CD4-positive, alpha-beta T cell (primary cell): ENCODE measurements at regions of chr9 and their contacts with region 1.

Region 1: GRCh38 chr9:98255578-98256296 is at the start of gene TBC1D2:
- DNase-seq: peak; percentile 95 to 99 (median 98)
- ATAC-seq: peak; percentile 86
- H3K4me3 ChIP-seq: peak within 1 kb of the TSS; percentile 81
- H3K4me3 Mint-ChIP-seq: peak within 1 kb of the TSS; percentile 99
- H3K27ac ChIP-seq: peak within 1 kb of the TSS; percentile 79 to 83
- H3K27ac Mint-ChIP-seq: peak within 1 kb of the TSS; percentile 92
- H3K4me1 ChIP-seq: peaks cover 39% of the 10 kb centered on the region
- H3K4me1 Mint-ChIP-seq: peaks cover 34% of the 10 kb centered on the region
- H3K27me3 ChIP-seq: no peaks in the 10 kb centered on the region
- H3K27me3 Mint-ChIP-seq: no peaks in the 10 kb centered on the region
- CTCF ChIP-seq: peak; percentile 11
- total RNA-seq, gene TBC1D2: 2.9 to 4.0 TPM

Region 2: GRCh38 chr9:97632985-97633858 is 622.5 kb before region 1 on chr9 and contains the starts of genes NCBP1 and TSTD2:
- CTCF ChIA-PET with region 1: no interaction called
- POLR2A ChIA-PET with region 1: interaction called, 39 read pairs
- intact Hi-C with region 1: loop called in 1 of 2 experiments (anchors 5 kb)
- DNase-seq: peak; percentile 92 to 99 (median 94)
- ATAC-seq: peak; percentile 82
- H3K4me3 ChIP-seq: peak within 1 kb of the TSS; percentile 72
- H3K4me3 Mint-ChIP-seq: peak within 1 kb of the TSS; percentile 97
- H3K27ac ChIP-seq: peak within 1 kb of the TSS; percentile 95 to 97
- H3K27ac Mint-ChIP-seq: peak within 1 kb of the TSS; percentile 99
- H3K4me1 ChIP-seq: peaks cover 37% of the 10 kb centered on the region
- H3K4me1 Mint-ChIP-seq: peaks cover 73% of the 10 kb centered on the region
- H3K27me3 ChIP-seq: no peaks in the 10 kb centered on the region
- H3K27me3 Mint-ChIP-seq: no peaks in the 10 kb centered on the region
- CTCF ChIP-seq: no peak
- total RNA-seq, gene NCBP1: 50.7 to 53.5 TPM
- total RNA-seq, gene TSTD2: 23.8 to 26.0 TPM

Region 3: DNA sequence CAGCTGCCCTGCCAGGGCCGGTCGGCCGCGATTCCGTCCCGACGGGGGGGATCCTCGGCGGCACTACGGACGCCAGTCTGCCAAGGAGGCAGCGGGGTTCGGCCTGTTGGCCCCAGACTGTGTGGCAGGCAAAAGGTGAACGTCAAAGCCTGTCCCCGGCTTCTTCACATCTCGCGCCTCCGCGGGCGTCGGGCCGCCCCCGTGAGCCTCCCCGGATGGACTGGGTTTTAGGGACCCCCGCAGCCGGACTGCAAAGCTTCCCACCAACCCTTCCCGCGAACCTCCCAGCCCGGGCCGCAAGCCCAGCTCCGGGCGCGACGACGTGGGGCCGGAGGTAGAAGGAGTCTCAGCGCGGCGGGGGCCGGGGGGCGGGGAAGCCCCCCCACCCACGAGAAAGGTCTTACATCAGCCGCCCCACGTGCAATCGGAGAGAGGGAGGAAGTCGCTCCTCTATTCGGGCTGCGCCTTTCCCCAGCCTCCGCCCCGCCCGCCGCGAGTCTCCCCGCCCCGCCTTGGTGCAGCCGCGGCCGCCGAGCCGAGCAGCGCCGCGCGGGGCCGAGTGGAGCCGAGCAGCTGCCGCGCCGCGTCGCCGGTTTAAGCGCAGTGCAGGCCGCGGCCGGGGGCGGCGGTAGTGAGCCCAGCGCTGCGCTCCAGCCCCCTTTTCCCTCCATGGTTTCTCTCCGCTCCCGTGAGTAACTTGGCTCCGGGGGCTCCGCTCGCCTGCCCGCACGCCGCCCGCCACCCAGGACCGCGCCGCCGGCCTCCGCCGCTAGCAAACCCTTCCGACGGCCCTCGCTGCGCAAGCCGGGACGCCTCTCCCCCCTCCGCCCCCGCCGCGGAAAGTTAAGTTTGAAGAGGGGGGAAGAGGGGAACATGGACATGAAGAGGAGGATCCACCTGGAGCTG is 272.8 kb before region 1 on chr9 and contains the start of gene ANP32B:
- CTCF ChIA-PET with region 1: interaction called, 3 read pairs
- POLR2A ChIA-PET with region 1: interaction called, 38 read pairs
- intact Hi-C with region 1: loop called in 1 of 2 experiments (anchors 5 kb)
- DNase-seq: peak; percentile 87 to 98 (median 94)
- ATAC-seq: peak; percentile 82
- H3K4me3 ChIP-seq: peak within 1 kb of the TSS; percentile 78
- H3K4me3 Mint-ChIP-seq: peak within 1 kb of the TSS; percentile 93
- H3K27ac ChIP-seq: peak within 1 kb of the TSS; percentile 78 to 88
- H3K27ac Mint-ChIP-seq: peak within 1 kb of the TSS; percentile 89
- H3K4me1 ChIP-seq: peaks cover 50% of the 10 kb centered on the region
- H3K4me1 Mint-ChIP-seq: peaks cover 73% of the 10 kb centered on the region
- H3K27me3 ChIP-seq: no peaks in the 10 kb centered on the region
- H3K27me3 Mint-ChIP-seq: no peaks in the 10 kb centered on the region
- CTCF ChIP-seq: peak; percentile 67
- total RNA-seq, gene ANP32B: 178 to 192 TPM

Region 4: DNA sequence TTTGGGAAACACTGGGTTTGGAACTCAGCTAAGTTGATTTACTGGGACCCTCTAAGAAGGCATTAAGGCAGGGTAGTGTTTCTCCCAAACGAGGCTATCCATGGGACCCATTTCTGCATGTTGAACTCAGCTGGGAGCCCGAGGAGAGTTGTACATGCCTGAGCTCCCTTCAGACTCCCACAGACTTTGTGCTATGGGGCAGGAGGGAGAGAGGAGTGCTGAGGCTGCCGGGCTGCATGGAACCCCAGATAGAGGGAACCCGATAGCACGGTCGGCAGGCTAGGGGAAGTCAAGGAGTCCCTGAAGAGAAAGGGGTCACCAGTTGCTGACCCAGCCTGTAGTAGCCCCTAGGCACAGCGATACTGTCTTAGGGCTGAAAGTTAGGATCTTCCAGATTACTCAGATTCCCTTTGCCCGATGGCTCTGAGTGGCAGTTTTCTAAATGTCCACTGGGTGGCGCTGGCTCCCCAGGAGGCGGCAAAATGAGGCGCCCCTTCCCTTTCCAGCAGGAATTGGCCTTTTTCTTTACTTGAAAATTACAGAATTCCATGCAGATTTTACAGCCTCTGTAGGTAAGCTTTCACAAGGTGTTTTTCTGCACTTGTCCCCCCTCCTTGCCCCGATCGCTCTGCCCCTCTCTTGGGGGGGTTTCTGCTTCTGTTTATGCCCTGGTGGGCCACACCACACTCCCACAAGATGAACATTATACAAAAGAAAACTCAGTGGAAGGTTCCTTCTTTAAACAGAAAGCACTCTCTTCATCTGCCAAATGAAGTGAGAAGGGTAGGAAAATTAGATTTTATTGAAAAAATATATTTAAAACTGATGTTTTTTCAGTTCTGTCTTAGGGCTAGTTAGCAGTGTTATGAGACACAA is 181.4 kb before region 1 on chr9:
- CTCF ChIA-PET with region 1: no interaction called
- POLR2A ChIA-PET with region 1: interaction called, 18 read pairs
- intact Hi-C with region 1: no loop called
- DNase-seq: peak; percentile 48 to 82 (median 65)
- ATAC-seq: no peak
- H3K4me3 ChIP-seq: no peak overlapping the region
- H3K4me3 Mint-ChIP-seq: peak overlapping the region; percentile 69
- H3K27ac ChIP-seq: peak overlapping the region; percentile 73 to 83
- H3K27ac Mint-ChIP-seq: peak overlapping the region; percentile 94
- H3K4me1 ChIP-seq: peaks cover 28% of the 10 kb centered on the region
- H3K4me1 Mint-ChIP-seq: peaks cover 51% of the 10 kb centered on the region
- H3K27me3 ChIP-seq: no peaks in the 10 kb centered on the region
- H3K27me3 Mint-ChIP-seq: no peaks in the 10 kb centered on the region
- CTCF ChIP-seq: peak; percentile 99

Region 5: DNA sequence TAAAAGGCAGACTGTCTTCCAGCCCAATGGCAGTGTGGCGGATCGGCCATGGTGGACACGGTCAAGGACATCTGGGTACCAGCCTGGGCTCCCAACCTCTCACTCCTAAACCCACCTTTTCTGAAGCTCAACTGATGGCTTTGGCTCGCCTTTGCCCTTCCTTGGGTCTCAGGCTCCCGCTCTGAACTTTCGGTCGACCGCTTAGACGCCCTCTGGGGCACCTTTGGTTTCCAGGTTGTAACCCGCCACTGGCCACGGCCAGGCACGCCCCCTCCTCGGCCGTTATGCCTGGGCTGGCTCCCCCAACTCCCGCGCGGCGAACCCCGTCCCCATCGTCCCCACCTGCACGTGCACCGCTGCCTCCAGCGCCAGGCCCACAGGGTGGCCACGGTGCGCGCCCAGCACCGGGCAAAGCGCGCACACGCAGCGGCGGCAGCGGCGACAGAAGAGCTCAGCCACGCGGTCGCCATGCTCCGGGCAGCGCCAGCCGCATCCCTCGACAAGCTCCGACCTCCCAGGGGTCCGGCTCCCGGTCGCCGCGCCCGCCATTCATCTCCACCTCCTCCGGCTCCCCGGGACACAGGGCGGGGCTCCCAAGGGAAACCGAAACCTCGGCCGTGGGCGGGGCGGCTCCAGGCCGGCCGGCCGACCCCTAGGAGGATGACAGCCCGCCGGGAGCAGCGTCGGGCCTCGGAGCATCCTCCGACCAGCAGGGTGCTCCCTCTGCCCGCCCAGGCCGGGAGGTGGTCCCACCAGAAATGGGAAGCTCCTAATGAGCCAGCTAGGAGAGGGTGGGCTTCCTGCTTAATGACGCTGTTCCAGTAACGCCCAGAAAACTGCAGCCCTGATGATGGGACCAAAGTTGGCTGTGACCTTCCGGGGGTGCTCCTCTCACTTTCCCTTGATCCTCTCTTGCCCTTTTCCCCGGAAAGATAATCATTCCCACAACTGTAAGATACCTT is 136.8 kb before region 1 on chr9 and contains the start of gene TRIM14:
- CTCF ChIA-PET with region 1: interaction called, 8 read pairs
- POLR2A ChIA-PET with region 1: interaction called, 81 read pairs
- intact Hi-C with region 1: no loop called
- DNase-seq: peak in 12 of 14 experiments; percentile 28 to 74 (median 46)
- ATAC-seq: peak; percentile 38
- H3K4me3 ChIP-seq: peak within 1 kb of the TSS; percentile 89
- H3K4me3 Mint-ChIP-seq: peak within 1 kb of the TSS; percentile 90
- H3K27ac ChIP-seq: peak within 1 kb of the TSS; percentile 79 to 84
- H3K27ac Mint-ChIP-seq: peak within 1 kb of the TSS; percentile 95
- H3K4me1 ChIP-seq: peaks cover 66% of the 10 kb centered on the region
- H3K4me1 Mint-ChIP-seq: peaks cover 65% of the 10 kb centered on the region
- H3K27me3 ChIP-seq: no peaks in the 10 kb centered on the region
- H3K27me3 Mint-ChIP-seq: no peaks in the 10 kb centered on the region
- CTCF ChIP-seq: no peak
- total RNA-seq, gene TRIM14: 23.5 to 23.6 TPM